CD4-positive, alpha-beta T cell (primary cell): ENCODE measurements at regions of chr22 and their contacts with region 1.

Region 1: DNA sequence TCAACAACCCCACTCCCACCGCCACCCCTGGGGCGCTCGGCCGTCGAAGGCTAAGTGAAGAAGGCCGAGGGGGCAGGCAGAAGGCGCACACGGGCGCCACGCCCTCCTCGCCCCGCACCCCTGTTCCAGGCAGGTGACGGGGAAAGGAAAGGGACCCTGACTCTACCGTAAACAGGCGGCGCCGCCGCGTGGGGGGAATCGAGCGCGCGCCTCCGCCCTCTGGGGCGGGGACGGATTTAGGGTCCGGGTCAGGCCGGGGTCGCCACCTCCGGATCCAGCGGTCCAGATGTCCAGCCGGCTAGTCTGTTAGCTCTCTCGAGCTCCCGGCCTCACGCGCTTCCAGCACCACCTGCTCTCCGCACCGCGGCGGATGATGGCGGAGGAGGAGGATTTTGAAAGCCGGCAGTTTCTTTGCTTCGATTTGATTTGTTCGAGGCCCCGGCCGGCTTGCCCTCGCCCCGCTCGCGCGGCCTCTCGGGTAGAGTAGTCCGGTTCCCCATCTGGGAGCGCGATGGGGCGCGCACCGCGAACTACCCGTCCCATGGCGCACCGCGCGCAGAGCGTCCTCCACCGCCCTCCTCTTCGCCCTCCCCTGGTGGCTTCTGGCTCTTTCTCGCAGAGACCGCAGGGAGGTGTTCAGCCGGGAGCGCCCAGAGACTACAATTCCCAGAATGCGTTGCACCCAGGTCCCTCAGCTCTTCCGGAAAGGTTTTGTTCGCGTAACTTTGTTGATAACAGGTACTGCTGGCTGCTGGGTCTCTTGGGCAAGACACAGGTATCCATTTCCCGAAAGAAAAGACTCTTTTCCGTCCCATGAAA is at the start of gene RANGAP1:
- DNase-seq: peak; percentile 95 to 100 (median 98)
- ATAC-seq: peak; percentile 85
- H3K4me3 ChIP-seq: peak within 1 kb of the TSS; percentile 100
- H3K4me3 Mint-ChIP-seq: peak within 1 kb of the TSS; percentile 96
- H3K27ac ChIP-seq: peak within 1 kb of the TSS; percentile 95 to 100
- H3K27ac Mint-ChIP-seq: peak within 1 kb of the TSS; percentile 100
- H3K4me1 ChIP-seq: peaks cover 28% of the 10 kb centered on the region
- H3K4me1 Mint-ChIP-seq: peaks cover 46% of the 10 kb centered on the region
- H3K27me3 ChIP-seq: no peaks in the 10 kb centered on the region
- H3K27me3 Mint-ChIP-seq: no peaks in the 10 kb centered on the region
- CTCF ChIP-seq: no peak
- total RNA-seq, gene RANGAP1: 163 to 172 TPM

Region 2: GRCh38 chr22:40203572-40203971 is 1082.5 kb before region 1 on chr22:
- CTCF ChIA-PET with region 1: no interaction called
- POLR2A ChIA-PET with region 1: no interaction called
- intact Hi-C with region 1: loop called in 1 of 2 experiments (anchors 5 kb)
- DNase-seq: peak in 8 of 14 experiments; percentile 25 to 71 (median 46)
- ATAC-seq: peak; percentile 96
- H3K4me3 ChIP-seq: no peak overlapping the region
- H3K4me3 Mint-ChIP-seq: peak overlapping the region; percentile 57
- H3K27ac ChIP-seq: peak overlapping the region; percentile 45 to 48
- H3K27ac Mint-ChIP-seq: peak overlapping the region; percentile 91
- H3K4me1 ChIP-seq: peaks cover 29% of the 10 kb centered on the region
- H3K4me1 Mint-ChIP-seq: peaks cover 86% of the 10 kb centered on the region
- H3K27me3 ChIP-seq: no peaks in the 10 kb centered on the region
- H3K27me3 Mint-ChIP-seq: no peaks in the 10 kb centered on the region
- CTCF ChIP-seq: no peak

Region 3: GRCh38 chr22:41197038-41197972 is 88.7 kb before region 1 on chr22:
- CTCF ChIA-PET with region 1: no interaction called
- POLR2A ChIA-PET with region 1: interaction called, 10 read pairs
- intact Hi-C with region 1: loop called in 1 of 2 experiments (anchors 2 kb)
- DNase-seq: peak; percentile 62 to 93 (median 76)
- ATAC-seq: peak; percentile 85
- H3K4me3 ChIP-seq: peak overlapping the region; percentile 92
- H3K4me3 Mint-ChIP-seq: peak overlapping the region; percentile 95
- H3K27ac ChIP-seq: no peak overlapping the region
- H3K27ac Mint-ChIP-seq: peak overlapping the region; percentile 28
- H3K4me1 ChIP-seq: peaks cover 19% of the 10 kb centered on the region
- H3K4me1 Mint-ChIP-seq: peaks cover 14% of the 10 kb centered on the region
- H3K27me3 ChIP-seq: no peaks in the 10 kb centered on the region
- H3K27me3 Mint-ChIP-seq: no peaks in the 10 kb centered on the region
- CTCF ChIP-seq: no peak

Region 4: GRCh38 chr22:41301105-41302020 is 15.3 kb after region 1 on chr22 and contains the start of gene ZC3H7B:
- CTCF ChIA-PET with region 1: interaction called, 34 read pairs
- POLR2A ChIA-PET with region 1: interaction called, 170 read pairs
- intact Hi-C with region 1: loop called (anchors 1 kb)
- DNase-seq: peak; percentile 71 to 95 (median 79)
- ATAC-seq: peak; percentile 97
- H3K4me3 ChIP-seq: peak within 1 kb of the TSS; percentile 97
- H3K4me3 Mint-ChIP-seq: peak within 1 kb of the TSS; percentile 84
- H3K27ac ChIP-seq: peak within 1 kb of the TSS; percentile 82 to 83
- H3K27ac Mint-ChIP-seq: peak within 1 kb of the TSS; percentile 92
- H3K4me1 ChIP-seq: peaks cover 30% of the 10 kb centered on the region
- H3K4me1 Mint-ChIP-seq: peaks cover 33% of the 10 kb centered on the region
- H3K27me3 ChIP-seq: no peaks in the 10 kb centered on the region
- H3K27me3 Mint-ChIP-seq: no peaks in the 10 kb centered on the region
- CTCF ChIP-seq: peak; percentile 63
- total RNA-seq, gene ZC3H7B: 29.5 to 32.7 TPM

Region 5: DNA sequence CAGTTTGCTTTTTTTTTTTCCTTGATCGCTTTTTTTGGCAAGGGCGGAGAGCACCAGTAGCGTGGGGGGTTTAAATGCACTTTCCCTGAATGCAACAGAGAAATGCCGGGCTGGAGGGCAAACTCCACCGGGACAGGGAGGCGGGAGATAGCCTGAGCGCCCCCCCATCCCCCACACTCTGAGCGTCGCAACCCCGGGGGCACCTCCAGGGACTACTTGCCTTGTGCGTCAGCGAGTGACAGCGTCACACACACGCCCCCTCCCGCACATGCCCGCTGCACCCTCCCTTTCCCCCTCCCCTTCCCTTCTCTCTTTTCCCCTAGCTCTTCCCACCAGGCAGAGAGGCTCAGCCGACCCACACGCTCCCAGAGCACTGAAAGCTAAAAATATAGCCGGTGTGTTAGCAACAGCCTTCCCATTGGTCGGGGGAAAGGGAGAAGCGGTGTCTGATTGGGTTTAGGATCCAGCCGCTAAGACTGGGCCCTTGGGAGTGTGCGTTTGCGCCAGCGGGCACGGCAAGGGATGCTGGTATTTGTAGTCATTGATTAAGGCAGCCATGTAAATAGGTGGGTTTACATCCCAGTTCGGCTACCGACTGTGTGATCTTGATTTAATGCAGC is 162.3 kb after region 1 on chr22:
- CTCF ChIA-PET with region 1: no interaction called
- POLR2A ChIA-PET with region 1: interaction called, 15 read pairs
- intact Hi-C with region 1: loop called (anchors 5 to 10 kb)
- DNase-seq: peak; percentile 79 to 97 (median 84)
- ATAC-seq: peak; percentile 73
- H3K4me3 ChIP-seq: peak overlapping the region; percentile 98
- H3K4me3 Mint-ChIP-seq: peak overlapping the region; percentile 94
- H3K27ac ChIP-seq: peak overlapping the region; percentile 97 to 98
- H3K27ac Mint-ChIP-seq: peak overlapping the region; percentile 95
- H3K4me1 ChIP-seq: peaks cover 41% of the 10 kb centered on the region
- H3K4me1 Mint-ChIP-seq: peaks cover 29% of the 10 kb centered on the region
- H3K27me3 ChIP-seq: no peaks in the 10 kb centered on the region
- H3K27me3 Mint-ChIP-seq: no peaks in the 10 kb centered on the region
- CTCF ChIP-seq: no peak

Region 6: GRCh38 chr22:41589391-41590241 is 303.6 kb after region 1 on chr22 and contains the start of gene PMM1:
- CTCF ChIA-PET with region 1: no interaction called
- POLR2A ChIA-PET with region 1: interaction called, 16 read pairs
- intact Hi-C with region 1: no loop called
- DNase-seq: peak; percentile 100
- ATAC-seq: peak; percentile 97
- H3K4me3 ChIP-seq: peak within 1 kb of the TSS; percentile 98
- H3K4me3 Mint-ChIP-seq: peak within 1 kb of the TSS; percentile 82
- H3K27ac ChIP-seq: peak within 1 kb of the TSS; percentile 29 to 64
- H3K27ac Mint-ChIP-seq: peak within 1 kb of the TSS; percentile 47
- H3K4me1 ChIP-seq: peaks cover 21% of the 10 kb centered on the region
- H3K4me1 Mint-ChIP-seq: peaks cover 17% of the 10 kb centered on the region
- H3K27me3 ChIP-seq: no peaks in the 10 kb centered on the region
- H3K27me3 Mint-ChIP-seq: no peaks in the 10 kb centered on the region
- CTCF ChIP-seq: no peak
- total RNA-seq, gene PMM1: 24.8 to 25.5 TPM